Thyroid gland (tissue), 4 donors: ENCODE measurements at regions of chr15 and their contacts with region 1.

Region 1: GRCh38 chr15:89139400-89140166 is 51.3 kb downstream of the ABHD2 start:
- DNase-seq: peak; percentile 30 to 35
- H3K4me3 ChIP-seq: no peak overlapping the region
- H3K27ac ChIP-seq: peak overlapping the region in 2 of 3 donors; percentile 18 to 88
- H3K4me1 ChIP-seq: peaks cover 10 to 39% of the 10 kb centered on the region in 2 donors
- H3K27me3 ChIP-seq: no peaks in the 10 kb centered on the region
- CTCF ChIP-seq: peak in 3 of 6 experiments; percentile 22 to 35 (median 32)
- POLR2A ChIP-seq: no peak

Region 2: DNA sequence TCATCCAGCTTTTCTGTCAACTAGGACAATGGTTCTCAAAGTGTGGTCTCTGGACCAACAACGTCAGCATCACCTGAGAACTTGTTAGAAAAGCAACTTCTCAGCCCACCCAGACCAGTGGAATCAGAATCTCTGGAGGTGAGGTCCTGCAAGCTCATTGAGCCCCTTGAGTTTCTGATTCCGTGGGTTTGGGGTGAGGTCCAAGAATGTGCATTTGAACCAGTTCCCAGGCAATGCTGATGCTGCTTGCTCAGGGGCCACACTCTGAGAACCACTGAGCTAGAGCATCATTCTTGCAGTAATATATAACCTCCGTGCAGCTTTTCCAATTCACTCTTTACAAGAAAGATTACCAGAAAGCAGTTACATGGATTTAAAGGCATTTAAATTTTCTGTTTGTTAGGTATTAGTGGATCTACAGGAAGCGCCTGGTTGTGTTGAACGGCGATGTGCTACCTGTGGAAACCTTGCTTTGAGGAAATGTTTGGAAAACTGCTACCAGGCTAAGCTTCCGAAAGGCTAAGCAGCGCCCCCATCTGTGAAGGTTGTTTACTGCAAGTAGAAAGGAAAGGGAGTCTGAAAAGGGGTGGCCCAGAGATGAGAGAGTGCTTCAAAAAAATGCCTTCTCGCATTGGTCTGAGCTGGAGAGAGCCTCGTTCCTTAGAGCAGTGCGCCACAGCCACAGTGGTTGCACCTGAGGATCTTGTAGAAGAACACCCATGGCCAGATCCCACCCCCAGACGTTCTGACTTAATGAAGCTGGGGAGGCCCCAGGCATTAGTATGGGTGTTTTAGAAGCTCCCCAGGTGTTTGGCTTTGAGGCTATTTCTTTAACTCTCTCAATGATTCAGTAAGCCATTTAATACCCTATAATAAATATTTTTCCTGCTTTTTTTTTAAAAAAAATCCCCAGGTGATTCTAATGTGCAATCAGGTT is 31.8 kb after region 1 on chr15:
- intact Hi-C with region 1: loop called (anchors 5 kb)
- DNase-seq: peak; percentile 37 to 52
- H3K4me3 ChIP-seq: no peak overlapping the region
- H3K27ac ChIP-seq: no peak overlapping the region
- H3K4me1 ChIP-seq: peaks cover 18 to 25% of the 10 kb centered on the region in 2 donors
- H3K27me3 ChIP-seq: no peaks in the 10 kb centered on the region
- CTCF ChIP-seq: peak; percentile 26 to 59 (median 42)
- POLR2A ChIP-seq: no peak